Activated naive CD4-positive, alpha-beta T cell treated with anti-CD3 and anti-CD28 coated beads, Interleukin-2, amount 10 ng/mL, durations not matched to agents 7 days and 5 days (primary cell): ENCODE measurements at regions of chr18 and their contacts with region 1.

Region 1: GRCh38 chr18:24488824-24489493 is 28.5 kb downstream of the HRH4 start:
- DNase-seq: no peak
- H3K4me3 Mint-ChIP-seq: no peak overlapping the region
- H3K27ac Mint-ChIP-seq: no peak overlapping the region
- H3K4me1 Mint-ChIP-seq: peaks cover 5% of the 10 kb centered on the region
- H3K27me3 Mint-ChIP-seq: peaks cover 33% of the 10 kb centered on the region

Region 2: DNA sequence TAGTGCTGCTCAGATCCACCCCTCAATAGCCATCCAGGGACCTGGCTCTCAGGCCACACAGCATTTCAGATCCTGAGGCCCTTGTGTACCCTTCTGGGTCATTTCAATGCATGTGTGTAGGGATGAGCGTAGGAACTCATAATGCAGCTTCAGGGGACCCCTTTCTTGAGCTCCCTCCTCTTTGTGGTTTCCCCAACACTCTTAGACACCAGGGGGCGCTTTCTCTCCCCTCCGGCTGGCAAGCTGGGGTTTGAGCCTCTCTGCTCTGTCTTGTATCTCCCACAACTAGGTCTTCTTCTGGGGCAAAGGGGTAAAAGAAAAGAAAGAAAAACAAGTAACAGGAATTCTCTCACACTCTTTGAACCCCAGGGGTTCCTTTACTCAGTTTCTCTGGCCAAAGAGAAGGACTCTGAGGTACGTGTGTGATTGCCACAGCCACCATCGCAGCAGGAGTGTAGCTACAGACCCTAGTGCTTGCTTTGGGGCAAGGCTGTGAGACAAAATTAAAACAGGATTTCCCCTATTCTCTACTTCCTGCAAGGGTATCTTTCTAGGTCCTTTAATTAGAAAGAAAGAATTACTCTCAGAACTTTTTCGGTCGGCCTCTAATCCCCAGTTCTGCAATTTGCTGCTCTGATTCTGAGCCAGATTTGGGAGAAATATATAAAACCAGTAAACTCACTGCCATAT is 312.1 kb before region 1 on chr18:
- CTCF ChIA-PET with region 1: interaction called, 15 read pairs
- DNase-seq: peak; percentile 52
- H3K4me3 Mint-ChIP-seq: no peak overlapping the region
- H3K27ac Mint-ChIP-seq: no peak overlapping the region
- H3K4me1 Mint-ChIP-seq: no peaks in the 10 kb centered on the region
- H3K27me3 Mint-ChIP-seq: peaks cover 7% of the 10 kb centered on the region

Region 3: GRCh38 chr18:24368749-24369148 is 120.2 kb before region 1 on chr18:
- CTCF ChIA-PET with region 1: interaction called, 186 read pairs
- DNase-seq: peak; percentile 44
- H3K4me3 Mint-ChIP-seq: no peak overlapping the region
- H3K27ac Mint-ChIP-seq: peak overlapping the region; percentile 73
- H3K4me1 Mint-ChIP-seq: peaks cover 22% of the 10 kb centered on the region
- H3K27me3 Mint-ChIP-seq: no peaks in the 10 kb centered on the region

Region 4: GRCh38 chr18:24446953-24447538 is 41.9 kb before region 1 on chr18:
- CTCF ChIA-PET with region 1: interaction called, 34 read pairs
- DNase-seq: no peak
- H3K4me3 Mint-ChIP-seq: no peak overlapping the region
- H3K27ac Mint-ChIP-seq: no peak overlapping the region
- H3K4me1 Mint-ChIP-seq: peaks cover 7% of the 10 kb centered on the region
- H3K27me3 Mint-ChIP-seq: no peaks in the 10 kb centered on the region

Region 5: GRCh38 chr18:24726727-24727492 is 238.0 kb after region 1 on chr18:
- CTCF ChIA-PET with region 1: interaction called, 14 read pairs
- DNase-seq: peak; percentile 71
- H3K4me3 Mint-ChIP-seq: no peak overlapping the region
- H3K27ac Mint-ChIP-seq: no peak overlapping the region
- H3K4me1 Mint-ChIP-seq: no peaks in the 10 kb centered on the region
- H3K27me3 Mint-ChIP-seq: no peaks in the 10 kb centered on the region